ENCODE measurements at regions of chr10 and their contacts with region 1.

Region 1: GRCh38 chr10:21194464-21194993 is 297.4 kb upstream of the NEBL start:
- DNase-seq: peak; percentile 76 to 95
- H3K4me3 ChIP-seq: peak overlapping the region; percentile 13; the same call in 1 of the 2 replicates
- H3K27ac ChIP-seq: peak overlapping the region; percentile 96
- H3K4me1 ChIP-seq: peaks cover 50% of the 10 kb centered on the region
- H3K27me3 ChIP-seq: no peaks in the 10 kb centered on the region
- CTCF ChIP-seq: no peak

Region 2: DNA sequence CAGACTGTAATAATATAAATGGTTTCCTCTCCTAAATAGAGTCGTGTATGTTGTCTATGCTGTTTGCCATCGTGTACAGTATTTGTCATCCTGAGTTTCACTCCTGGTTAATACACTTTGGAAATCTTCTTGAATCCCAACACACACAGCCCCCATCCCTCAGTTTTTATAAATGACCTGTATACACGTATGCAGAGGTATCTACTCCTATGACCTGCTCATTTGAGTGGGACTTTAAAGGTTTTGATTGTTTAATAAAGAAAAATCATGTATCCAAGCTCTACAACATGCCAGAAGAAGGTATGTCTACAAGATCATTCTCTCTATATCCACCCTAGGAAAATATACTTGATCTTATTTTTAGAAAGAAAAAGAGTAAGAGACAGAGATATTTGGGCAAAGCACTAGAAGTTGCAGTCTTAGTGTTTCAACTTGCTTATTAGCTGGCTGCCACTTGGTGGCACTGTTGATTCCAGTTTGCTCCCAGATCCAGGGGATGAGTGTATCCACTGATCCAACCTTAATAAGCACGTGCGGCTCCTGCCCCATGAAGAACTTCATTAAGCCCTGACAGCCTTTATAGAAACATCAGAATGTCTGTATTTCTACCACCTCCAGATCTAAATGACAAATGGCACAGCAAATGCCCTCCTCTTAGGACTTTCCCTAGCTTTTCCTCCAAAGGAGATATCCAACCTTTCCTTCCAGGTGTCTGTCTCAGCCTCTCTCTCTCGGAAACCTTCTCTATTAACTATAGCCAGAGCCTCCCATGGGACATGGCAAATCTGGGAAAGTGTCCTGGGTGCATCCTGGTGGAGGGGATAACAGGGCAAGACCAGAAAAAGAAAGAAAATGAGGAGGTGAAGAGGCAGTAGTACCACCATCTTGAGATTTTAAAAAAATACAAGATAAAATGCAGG is 115.9 kb before region 1 on chr10:
- CTCF ChIA-PET with region 1: no interaction called
- POLR2A ChIA-PET with region 1: no interaction called
- intact Hi-C with region 1: loop called (anchors 1 kb)
- DNase-seq: peak; percentile 54 to 68
- H3K4me3 ChIP-seq: no peak overlapping the region
- H3K27ac ChIP-seq: no peak overlapping the region
- H3K4me1 ChIP-seq: peaks cover 9% of the 10 kb centered on the region
- H3K27me3 ChIP-seq: no peaks in the 10 kb centered on the region
- CTCF ChIP-seq: peak; percentile 81

Region 3: DNA sequence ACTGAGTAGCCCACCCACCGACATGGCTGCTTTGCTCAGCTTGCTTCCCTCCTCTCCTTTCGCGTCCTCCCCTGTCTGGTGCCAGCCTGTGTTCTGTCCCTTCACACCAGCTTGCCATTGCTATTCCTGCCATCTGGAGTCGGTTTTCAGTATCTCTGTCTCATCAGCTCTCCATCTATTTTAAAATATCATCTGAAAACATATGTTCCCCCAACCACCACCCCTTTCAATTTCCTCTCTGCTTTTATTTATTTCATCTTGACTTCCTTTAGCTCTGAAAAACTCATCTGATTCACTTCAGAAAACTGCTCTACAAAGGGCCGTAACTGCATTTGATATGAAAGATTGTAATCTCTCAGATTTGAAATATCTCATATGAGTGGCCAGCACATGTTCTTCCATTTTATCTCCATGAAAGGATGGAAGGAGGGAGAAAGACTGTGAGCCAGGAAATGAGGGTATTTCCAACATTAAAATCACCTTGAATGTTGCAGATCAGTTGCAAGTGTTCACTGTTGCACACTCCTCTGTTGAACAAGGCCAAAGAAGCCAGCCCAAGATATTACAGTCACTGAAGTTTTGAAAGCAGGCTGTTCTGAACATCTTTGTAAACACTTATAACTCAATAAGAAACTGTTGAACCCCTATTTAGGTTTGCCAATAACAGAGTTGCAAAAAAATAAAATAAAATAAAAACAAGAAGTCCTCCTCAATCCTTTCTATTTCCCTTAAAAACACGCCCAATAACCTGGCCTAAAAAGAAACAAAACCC is 95.1 kb before region 1 on chr10:
- CTCF ChIA-PET with region 1: no interaction called
- POLR2A ChIA-PET with region 1: no interaction called
- intact Hi-C with region 1: loop called (anchors 5 kb)
- DNase-seq: no peak
- H3K4me3 ChIP-seq: no peak overlapping the region
- H3K27ac ChIP-seq: peak overlapping the region; percentile 19; the same call in 1 of the 2 replicates
- H3K4me1 ChIP-seq: peaks cover 38% of the 10 kb centered on the region
- H3K27me3 ChIP-seq: no peaks in the 10 kb centered on the region
- CTCF ChIP-seq: no peak

Region 4: DNA sequence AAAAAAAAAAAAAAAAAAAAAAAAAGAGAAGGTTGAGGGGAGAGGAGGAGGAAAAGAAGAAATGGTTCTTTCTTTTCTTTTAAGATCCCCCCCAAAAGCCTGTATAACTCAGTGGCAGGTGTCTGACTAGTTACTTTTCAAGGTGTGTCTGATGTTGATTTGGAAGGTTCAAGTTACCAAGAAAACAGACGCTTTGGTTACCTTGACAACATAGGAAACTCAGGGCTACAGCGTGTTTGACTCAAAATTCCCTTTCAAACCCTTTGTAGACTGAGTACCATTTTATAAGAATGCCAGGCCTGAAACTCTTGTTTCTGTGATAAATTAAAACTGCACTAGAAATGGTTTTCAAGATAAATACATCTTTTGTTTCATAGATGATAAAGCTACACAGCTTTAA is 44.2 kb after region 1 on chr10:
- CTCF ChIA-PET with region 1: interaction called, 3 read pairs
- POLR2A ChIA-PET with region 1: no interaction called
- intact Hi-C with region 1: loop called (anchors 1 kb)
- DNase-seq: no peak
- H3K4me3 ChIP-seq: no peak overlapping the region
- H3K27ac ChIP-seq: peak overlapping the region; percentile 78
- H3K4me1 ChIP-seq: peaks cover 25% of the 10 kb centered on the region
- H3K27me3 ChIP-seq: no peaks in the 10 kb centered on the region
- CTCF ChIP-seq: no peak

Region 5: GRCh38 chr10:21270976-21271375 is 76.4 kb after region 1 on chr10:
- CTCF ChIA-PET with region 1: no interaction called
- POLR2A ChIA-PET with region 1: no interaction called
- intact Hi-C with region 1: loop called (anchors 1 kb)
- DNase-seq: no peak
- H3K4me3 ChIP-seq: no peak overlapping the region
- H3K27ac ChIP-seq: no peak overlapping the region
- H3K4me1 ChIP-seq: peaks cover 22% of the 10 kb centered on the region
- H3K27me3 ChIP-seq: no peaks in the 10 kb centered on the region
- CTCF ChIP-seq: no peak

Region 6: DNA sequence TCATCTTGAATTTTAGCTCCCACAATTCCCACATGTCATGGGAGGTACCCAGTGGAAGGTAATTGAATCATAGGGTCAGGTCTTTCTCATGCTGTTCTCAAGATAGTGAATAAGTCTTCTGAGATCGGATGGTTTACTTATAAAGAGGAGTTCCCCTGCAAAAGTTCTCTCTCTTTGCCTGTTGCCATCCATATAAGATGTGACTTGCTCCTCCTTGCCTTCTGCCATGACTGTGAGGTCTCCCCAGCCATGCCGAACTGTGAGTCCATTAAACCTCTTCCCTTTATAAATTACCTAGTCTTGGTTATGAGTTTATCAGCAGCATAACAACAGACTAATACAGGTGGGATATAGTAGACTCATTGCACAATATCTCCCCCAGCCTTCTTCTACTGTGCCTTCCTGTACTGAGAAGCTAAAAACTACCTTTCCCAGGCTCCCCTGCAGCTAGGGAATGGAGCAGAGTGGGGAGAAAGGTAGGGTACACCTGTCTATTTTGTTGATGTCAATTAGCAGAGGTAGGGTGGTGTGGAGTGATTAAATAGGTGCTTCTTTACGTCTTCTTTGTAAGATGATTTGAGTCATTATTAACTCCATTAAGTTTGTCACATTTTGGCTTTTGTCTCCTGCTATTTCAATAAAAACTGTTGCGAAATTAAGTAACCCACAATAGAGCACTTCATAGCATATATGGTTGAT is 1071.5 kb after region 1 on chr10:
- CTCF ChIA-PET with region 1: no interaction called
- POLR2A ChIA-PET with region 1: interaction called, 14 read pairs
- intact Hi-C with region 1: no loop called
- DNase-seq: no peak
- H3K4me3 ChIP-seq: no peak overlapping the region
- H3K27ac ChIP-seq: no peak overlapping the region
- H3K4me1 ChIP-seq: no peaks in the 10 kb centered on the region
- H3K27me3 ChIP-seq: no peaks in the 10 kb centered on the region
- CTCF ChIP-seq: no peak